Cardiac septum (tissue), 1 donor: ENCODE measurements at regions of chr1 and their contacts with region 1.

Region 1: DNA sequence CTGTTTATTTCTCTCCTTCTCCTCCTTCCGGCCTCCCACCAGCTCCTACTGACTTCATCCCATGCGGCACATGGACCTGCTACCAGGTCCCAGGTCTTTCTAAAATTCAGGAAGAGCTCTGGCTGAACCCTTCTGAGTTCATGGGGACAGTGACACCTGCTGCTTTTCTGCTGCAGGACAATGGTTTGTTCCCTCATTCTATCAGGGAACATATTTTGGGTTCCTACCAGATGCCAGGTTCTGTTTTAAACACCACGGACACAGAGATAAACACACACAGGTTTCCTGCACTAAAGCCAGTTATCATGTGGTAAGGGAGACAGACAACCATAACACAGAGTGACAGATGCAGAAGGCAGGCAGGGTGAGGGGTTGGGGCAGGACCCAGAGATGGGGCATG is 114.0 kb upstream of the RAB4A start:
- DNase-seq: no peak

Region 2: GRCh38 chr1:228664399-228664914 is 492.4 kb before region 1 on chr1:
- intact Hi-C with region 1: loop called (anchors 5 kb)
- DNase-seq: peak; percentile 87

Region 3: GRCh38 chr1:229068270-229068987 is 88.4 kb before region 1 on chr1:
- intact Hi-C with region 1: loop called (anchors 5 kb)
- DNase-seq: peak; percentile 85